ENCODE measurements at regions of chr6 and their contacts with region 1.

Region 1: DNA sequence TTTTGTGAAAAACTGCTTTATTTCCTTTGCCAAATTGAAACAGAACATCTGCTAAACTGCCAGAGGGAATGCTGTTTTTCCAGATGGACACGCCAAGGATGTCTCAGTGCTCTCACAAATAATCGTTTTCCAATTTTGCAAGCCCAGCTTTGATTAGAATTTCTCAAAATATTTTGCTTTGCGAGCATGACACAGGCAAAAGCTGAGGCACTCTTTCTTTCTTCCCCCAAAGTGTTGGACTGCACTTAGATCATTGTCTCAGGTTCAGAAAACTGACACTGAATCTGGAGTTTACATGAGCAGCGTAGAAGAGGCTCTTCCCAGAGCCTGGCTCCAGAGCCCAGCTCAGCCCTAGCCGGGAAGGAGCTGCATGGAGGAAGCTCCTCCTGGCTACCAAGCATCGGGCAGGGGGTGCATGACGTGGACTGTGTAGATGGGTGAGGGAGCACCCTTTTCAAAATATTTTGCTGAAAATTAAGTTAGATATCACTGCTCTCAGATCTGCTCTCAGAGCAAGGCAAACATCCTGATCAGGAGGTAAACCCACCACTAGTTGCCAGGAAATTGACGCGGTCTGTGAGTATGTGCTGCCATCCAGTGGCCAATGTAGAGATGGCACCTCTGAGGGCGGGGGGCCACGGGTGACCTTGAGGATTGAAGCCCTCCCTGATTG is 107.5 kb downstream of the SLC22A3 start:
- DNase-seq: peak; percentile 66
- H3K4me3 Mint-ChIP-seq: no peak overlapping the region
- H3K27ac Mint-ChIP-seq: no peak overlapping the region
- H3K4me1 Mint-ChIP-seq: no peaks in the 10 kb centered on the region
- H3K27me3 Mint-ChIP-seq: no peaks in the 10 kb centered on the region
- CTCF ChIP-seq: peak; percentile 99

Region 2: GRCh38 chr6:159693128-159693893 is 762.4 kb before region 1 on chr6 and contains the start of gene SOD2:
- CTCF ChIA-PET with region 1: no interaction called
- POLR2A ChIA-PET with region 1: no interaction called
- intact Hi-C with region 1: loop called (anchors 10 kb)
- DNase-seq: peak; percentile 91
- H3K4me3 Mint-ChIP-seq: peak within 1 kb of the TSS; percentile 77
- H3K27ac Mint-ChIP-seq: peak within 1 kb of the TSS; percentile 97
- H3K4me1 Mint-ChIP-seq: peaks cover 34% of the 10 kb centered on the region
- H3K27me3 Mint-ChIP-seq: no peaks in the 10 kb centered on the region
- CTCF ChIP-seq: no peak
- total RNA-seq, gene SOD2: 424 and 600 TPM in 2 replicates

Region 3: DNA sequence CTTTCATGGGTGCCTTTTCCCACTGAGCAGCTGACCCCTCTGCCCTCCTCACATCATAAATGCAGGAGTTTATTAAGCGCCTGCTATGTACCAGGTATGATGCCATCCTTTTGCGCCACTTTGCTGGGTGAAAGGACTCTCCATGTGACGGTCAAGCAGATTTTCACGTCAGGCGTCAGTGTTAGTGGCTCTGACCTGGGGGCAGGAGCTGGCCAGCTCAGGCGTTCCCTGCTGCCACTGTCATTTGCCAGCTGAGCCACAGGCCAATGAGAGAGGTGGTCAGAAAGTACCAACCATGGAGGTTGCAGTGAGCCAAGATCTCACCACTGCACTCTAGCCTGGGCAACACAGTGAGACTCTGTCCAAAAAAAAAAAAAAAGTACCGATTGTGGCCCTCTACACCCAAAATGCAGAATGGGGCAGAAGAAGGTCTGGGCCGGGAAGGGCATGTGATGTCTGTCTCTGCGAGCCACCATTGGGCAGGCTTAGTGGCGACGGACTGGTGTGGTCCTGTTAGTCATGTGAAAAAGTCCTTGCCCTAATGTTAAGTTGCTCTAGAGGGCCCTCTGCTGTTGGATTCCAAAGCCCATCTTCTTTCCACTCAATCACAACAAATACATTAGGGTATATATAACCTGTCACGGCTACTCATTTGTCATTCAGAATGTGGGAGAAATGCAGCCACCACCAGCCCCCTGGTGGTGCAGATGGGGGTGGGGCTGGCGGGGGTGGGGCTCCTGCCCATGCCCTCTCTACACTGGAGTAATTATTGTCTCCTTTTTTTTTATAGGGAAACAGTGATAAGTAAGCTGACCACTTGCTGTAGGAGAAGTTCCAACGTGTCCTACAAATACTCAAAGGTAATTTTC is 352.5 kb before region 1 on chr6:
- CTCF ChIA-PET with region 1: interaction called, 11 read pairs
- POLR2A ChIA-PET with region 1: no interaction called
- intact Hi-C with region 1: no loop called
- DNase-seq: peak; percentile 48
- H3K4me3 Mint-ChIP-seq: no peak overlapping the region
- H3K27ac Mint-ChIP-seq: no peak overlapping the region
- H3K4me1 Mint-ChIP-seq: no peaks in the 10 kb centered on the region
- H3K27me3 Mint-ChIP-seq: no peaks in the 10 kb centered on the region
- CTCF ChIP-seq: peak; percentile 28

Region 4: DNA sequence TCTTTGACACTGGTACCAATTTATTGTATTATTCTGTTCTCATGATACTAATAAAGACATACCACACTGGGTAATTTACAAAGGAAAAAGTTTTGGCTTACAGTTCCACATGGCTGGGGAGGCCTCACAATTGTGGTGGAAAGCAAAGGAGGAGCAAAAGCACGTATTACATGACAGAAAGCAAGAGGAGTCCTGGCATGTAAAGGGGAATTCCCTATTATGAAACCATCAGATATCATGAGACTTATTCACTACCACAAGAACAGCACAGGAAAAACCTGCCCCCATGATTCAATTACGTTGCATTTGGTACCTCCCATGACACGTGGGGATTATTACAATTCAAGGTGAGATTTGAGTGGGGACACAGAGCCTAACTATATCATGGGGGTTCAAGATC is 240.4 kb before region 1 on chr6:
- CTCF ChIA-PET with region 1: interaction called, 115 read pairs
- POLR2A ChIA-PET with region 1: interaction called, 16 read pairs
- intact Hi-C with region 1: no loop called
- DNase-seq: peak; percentile 32
- H3K4me3 Mint-ChIP-seq: no peak overlapping the region
- H3K27ac Mint-ChIP-seq: no peak overlapping the region
- H3K4me1 Mint-ChIP-seq: no peaks in the 10 kb centered on the region
- H3K27me3 Mint-ChIP-seq: peaks cover 17% of the 10 kb centered on the region
- CTCF ChIP-seq: no peak

Region 5: DNA sequence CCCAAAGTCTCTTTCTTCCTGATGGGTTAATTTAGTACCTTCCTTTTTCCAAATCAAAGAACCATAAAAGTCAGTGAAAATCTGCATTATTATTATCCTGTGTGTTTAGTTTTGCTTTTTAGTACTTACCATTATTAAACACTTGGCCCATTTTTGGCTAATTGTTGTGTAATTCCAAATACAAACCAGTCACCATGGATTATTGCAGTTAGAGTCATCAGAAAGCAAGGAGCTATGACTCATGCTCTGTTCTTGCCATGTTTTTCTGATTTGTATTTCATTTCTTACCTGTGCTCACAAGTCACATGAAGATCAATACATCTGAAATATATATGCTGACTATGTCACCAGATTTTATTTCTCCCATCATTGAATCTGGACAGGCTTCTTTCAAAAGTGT is 76.2 kb before region 1 on chr6:
- CTCF ChIA-PET with region 1: interaction called, 14 read pairs
- POLR2A ChIA-PET with region 1: interaction called, 6 read pairs
- intact Hi-C with region 1: no loop called
- DNase-seq: peak; percentile 76
- H3K4me3 Mint-ChIP-seq: peak overlapping the region; percentile 66
- H3K27ac Mint-ChIP-seq: peak overlapping the region; percentile 93
- H3K4me1 Mint-ChIP-seq: peaks cover 12% of the 10 kb centered on the region
- H3K27me3 Mint-ChIP-seq: no peaks in the 10 kb centered on the region
- CTCF ChIP-seq: no peak

Region 6: DNA sequence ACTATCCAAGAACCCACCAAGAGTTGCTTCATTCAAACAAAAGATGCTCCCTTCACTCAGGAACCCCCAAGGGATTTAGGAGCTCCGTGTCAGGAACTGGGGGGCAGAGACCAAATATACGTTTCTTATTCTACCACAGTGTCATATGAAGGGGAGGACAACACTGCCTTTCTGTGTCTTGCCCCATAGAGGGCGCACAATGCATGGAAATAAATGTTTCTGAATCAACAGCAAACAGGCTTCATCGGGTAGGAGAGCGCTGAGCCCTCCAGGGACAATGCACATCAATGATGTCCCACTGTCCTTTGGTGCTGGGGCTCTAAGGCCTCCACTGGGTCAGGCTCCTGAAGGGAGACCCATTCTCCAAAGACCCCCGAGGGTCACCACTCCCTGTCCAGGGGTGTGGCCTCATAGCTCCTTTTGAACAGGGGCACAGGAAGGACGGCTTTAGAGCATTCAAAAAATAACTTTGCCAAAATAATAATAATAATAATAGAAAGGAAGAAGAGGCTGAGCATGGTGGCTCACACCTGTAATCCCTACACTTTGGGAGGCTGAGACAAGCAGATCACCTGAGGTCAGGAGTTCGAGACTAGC is 277.5 kb after region 1 on chr6:
- CTCF ChIA-PET with region 1: no interaction called
- POLR2A ChIA-PET with region 1: no interaction called
- intact Hi-C with region 1: no loop called
- DNase-seq: peak; percentile 60
- H3K4me3 Mint-ChIP-seq: no peak overlapping the region
- H3K27ac Mint-ChIP-seq: no peak overlapping the region
- H3K4me1 Mint-ChIP-seq: peaks cover 6% of the 10 kb centered on the region
- H3K27me3 Mint-ChIP-seq: no peaks in the 10 kb centered on the region
- CTCF ChIP-seq: peak; percentile 85

Region 7: GRCh38 chr6:161152907-161153662 is 697.4 kb after region 1 on chr6:
- CTCF ChIA-PET with region 1: no interaction called
- POLR2A ChIA-PET with region 1: no interaction called
- intact Hi-C with region 1: no loop called
- DNase-seq: peak; percentile 23
- H3K4me3 Mint-ChIP-seq: no peak overlapping the region
- H3K27ac Mint-ChIP-seq: no peak overlapping the region
- H3K4me1 Mint-ChIP-seq: no peaks in the 10 kb centered on the region
- H3K27me3 Mint-ChIP-seq: no peaks in the 10 kb centered on the region
- CTCF ChIP-seq: peak; percentile 50

Measured in MCF 10A (cell line).